Esophagus muscularis mucosa (tissue), 4 donors: ENCODE measurements at regions of chr3 and their contacts with region 1.

Region 1: DNA sequence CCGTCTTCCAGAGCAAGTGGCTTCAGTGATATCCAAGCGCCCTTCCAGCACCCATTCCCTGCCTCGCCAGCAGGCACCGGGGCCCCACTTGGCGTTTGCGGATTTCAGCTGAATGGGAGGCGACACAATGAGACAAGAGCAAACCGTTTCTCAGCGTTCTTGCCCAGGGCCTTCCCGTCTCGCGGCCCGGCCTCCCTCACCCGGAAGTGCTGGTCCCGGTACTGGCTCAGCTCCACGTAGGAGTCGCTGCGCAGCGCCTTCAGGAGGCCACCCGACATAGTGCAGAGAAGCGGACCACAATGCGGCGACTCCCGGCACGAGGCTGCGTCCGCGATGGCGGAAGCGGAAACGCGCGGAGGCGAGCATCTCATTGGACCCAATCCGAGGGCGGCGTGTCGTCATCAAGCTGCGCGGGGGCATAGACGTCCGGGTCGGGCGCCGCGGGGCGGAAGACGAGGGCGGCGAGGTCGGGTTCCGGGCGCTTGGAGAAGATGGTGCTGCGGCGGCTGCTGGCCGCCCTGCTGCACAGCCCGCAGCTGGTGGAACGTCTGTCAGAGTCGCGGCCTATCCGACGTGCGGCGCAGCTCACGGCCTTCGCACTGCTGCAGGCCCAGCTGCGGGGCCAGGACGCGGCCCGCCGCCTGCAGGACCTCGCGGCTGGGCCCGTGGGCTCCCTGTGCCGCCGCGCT is at the start of gene NCBP2:
- DNase-seq: peak; percentile 100
- H3K4me3 ChIP-seq: peak within 1 kb of the TSS; percentile 78 to 100 (median 90)
- H3K27ac ChIP-seq: peak within 1 kb of the TSS; percentile 88 to 97 (median 89)
- H3K4me1 ChIP-seq: peaks cover 22 to 40% (median 36%) of the 10 kb centered on the region in 4 donors
- H3K27me3 ChIP-seq: peaks cover 0 to 6% (median 0%) of the 10 kb centered on the region in 4 donors
- CTCF ChIP-seq: peak; percentile 44 to 67 (median 48)
- EP300 ChIP-seq: no peak
- POLR2A ChIP-seq: peak; percentile 71
- total RNA-seq, gene NCBP2: 37.8 to 54.3 (median 45.8) TPM

Region 2: DNA sequence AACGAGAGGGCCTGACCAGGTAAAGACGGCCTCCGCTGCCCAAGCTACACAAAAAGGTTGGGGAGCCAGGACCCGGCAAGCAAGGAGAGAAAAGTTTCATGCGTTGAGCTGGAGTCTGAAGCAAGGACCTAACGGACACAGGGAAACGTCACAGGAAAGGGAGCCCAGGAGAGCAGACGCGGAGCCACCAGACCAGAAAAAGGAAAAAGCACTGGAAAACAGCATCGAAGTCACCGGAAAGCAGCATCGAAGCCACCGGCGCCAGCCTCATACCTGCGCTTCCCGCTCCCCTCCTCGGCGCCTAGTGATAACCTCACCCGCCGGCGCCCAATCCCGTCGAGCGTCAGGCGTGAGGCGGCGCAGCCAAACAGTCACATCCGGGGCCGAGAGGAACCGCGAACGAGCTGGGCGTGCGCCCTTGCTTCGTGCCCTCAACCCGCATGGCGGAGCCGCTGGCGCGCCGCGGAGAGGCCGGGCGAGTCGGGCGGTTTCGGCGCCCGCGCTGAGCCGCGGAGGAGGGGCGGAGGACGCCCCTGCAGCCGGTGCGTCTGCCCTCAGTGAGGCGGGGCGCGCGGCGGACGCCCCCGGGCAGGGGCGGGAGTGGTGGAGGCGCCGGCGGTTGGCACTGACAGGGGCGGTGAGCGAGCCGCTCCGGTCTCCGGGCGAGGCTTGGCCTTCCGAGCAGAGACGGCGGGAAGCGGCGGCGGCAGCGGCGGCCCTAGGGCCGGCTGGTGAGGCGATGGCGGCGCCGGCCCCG is 373.9 kb before region 1 on chr3 and contains the starts of genes FBXO45 and WDR53:
- intact Hi-C with region 1: loop called (anchors 5 kb)
- DNase-seq: peak; percentile 98
- H3K4me3 ChIP-seq: peak within 1 kb of the TSS; percentile 92 to 96 (median 93)
- H3K27ac ChIP-seq: peak within 1 kb of the TSS; percentile 87 to 96 (median 92)
- H3K4me1 ChIP-seq: peaks cover 29 to 59% (median 37%) of the 10 kb centered on the region in 4 donors
- H3K27me3 ChIP-seq: no peaks in the 10 kb centered on the region
- CTCF ChIP-seq: peak in 1 of 3 experiments; percentile 9
- EP300 ChIP-seq: peak; percentile 18
- POLR2A ChIP-seq: peak; percentile 75
- total RNA-seq, gene FBXO45: 9.0 to 14.7 (median 9.8) TPM
- total RNA-seq, gene WDR53: 3.8 to 8.7 (median 5.6) TPM

Region 3: DNA sequence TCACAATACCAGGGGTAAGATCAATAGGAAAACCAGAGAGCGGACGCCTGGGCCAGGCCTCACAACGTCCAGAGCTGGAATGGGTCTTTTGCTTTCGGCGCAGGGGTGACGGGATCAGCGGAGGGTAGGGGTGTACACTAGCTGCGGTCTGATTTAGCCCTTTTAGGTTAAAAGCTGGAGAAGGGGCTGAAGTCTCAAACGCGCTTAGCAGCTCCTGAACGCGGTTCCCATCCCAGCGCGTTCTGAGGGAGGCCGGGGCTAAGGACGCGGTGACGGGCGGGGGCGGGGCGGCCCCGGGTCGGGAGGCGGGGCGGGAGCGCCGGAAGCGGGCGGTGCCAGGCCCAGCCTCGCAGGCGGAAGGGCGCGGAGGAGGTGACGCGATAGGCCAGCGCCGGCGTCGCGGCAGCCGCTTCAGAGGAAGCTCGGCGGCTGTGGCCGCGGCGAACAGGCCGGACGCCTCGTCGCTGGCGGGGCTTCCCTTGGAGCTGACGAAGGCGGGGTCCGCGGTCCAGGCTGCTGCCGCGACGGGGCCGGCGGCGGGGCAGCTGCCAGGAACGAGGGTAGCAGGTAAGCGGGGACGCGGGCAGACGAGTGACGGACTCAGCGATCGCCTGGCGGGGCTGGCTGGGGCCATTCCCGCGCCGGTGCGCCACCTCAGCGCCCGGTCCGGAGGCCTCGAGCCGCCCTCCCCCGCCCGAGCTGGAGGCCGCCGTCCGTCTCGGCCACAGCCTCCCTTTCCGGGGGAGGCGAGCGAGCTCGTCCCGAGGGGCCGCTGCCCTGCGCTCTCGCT is 74.7 kb before region 1 on chr3 and contains the start of gene SENP5:
- intact Hi-C with region 1: loop called (anchors 5 kb)
- DNase-seq: peak; percentile 96
- H3K4me3 ChIP-seq: peak within 1 kb of the TSS; percentile 93 to 100 (median 97)
- H3K27ac ChIP-seq: peak within 1 kb of the TSS; percentile 88 to 99 (median 98)
- H3K4me1 ChIP-seq: peaks cover 27 to 46% (median 45%) of the 10 kb centered on the region in 4 donors
- H3K27me3 ChIP-seq: no peaks in the 10 kb centered on the region
- CTCF ChIP-seq: no peak
- EP300 ChIP-seq: no peak
- POLR2A ChIP-seq: peak; percentile 77
- total RNA-seq, gene SENP5: 43.7 to 45.4 (median 44.1) TPM